Vagina (tissue), 2 donors: ENCODE measurements at regions of chr19 and their contacts with region 1.

Region 1: DNA sequence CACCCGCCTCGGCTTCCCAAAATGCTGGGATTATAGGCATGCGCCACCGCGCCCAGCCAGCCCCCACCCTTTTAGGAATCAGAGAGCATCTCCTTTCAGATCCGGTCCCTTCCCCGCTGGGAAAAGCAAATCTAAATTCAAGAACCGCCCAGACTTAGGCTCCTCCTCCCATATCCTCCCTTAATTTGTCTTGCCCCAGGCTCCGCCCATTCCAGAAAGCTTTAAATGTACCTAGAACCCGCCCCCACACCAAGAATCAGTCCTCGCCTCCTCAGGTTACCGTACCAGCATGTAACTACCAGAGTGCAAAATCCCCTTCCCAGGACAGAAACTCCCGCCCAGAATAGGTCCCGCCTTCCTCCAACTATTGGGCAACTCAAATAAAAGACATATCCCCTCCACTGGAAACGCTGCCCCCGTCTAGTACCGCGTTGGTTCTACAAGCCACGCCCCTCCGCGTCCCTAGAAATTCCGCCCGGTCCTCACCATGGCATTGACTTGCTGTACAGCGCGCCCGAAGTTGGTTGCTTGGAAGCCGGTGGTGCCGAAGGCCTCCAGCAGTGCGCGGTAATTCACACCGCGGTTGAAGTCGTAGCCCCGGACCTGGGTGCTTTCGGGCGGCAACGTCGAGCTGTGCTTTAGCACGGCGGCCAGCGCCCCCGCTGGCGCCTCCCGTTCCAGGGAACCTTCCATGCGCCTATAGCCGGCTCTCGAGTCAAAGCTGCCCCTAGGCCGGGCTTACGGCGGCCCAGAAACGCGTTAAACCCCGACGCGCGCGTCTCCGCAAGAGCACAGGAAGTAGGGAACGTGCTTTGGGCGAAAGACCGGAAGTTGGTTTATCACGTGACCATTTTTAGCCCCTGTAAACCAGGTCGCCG is at the start of gene DHPS:
- DNase-seq: peak in 1 of 2 donors; percentile 94
- H3K4me3 ChIP-seq: peak within 1 kb of the TSS; percentile 78 to 96
- H3K27ac ChIP-seq: peak within 1 kb of the TSS; percentile 90
- H3K4me1 ChIP-seq: peaks cover 20% of the 10 kb centered on the region
- H3K27me3 ChIP-seq: no peaks in the 10 kb centered on the region
- CTCF ChIP-seq: no peak
- POLR2A ChIP-seq: peak in 1 of 2 donors; percentile 10
- total RNA-seq, gene DHPS: 119 TPM

Region 2: GRCh38 chr19:12626958-12627357 is 54.4 kb before region 1 on chr19:
- intact Hi-C with region 1: loop called (anchors 2 kb)
- DNase-seq: no peak
- H3K4me3 ChIP-seq: no peak overlapping the region
- H3K27ac ChIP-seq: no peak overlapping the region
- H3K4me1 ChIP-seq: peaks cover 10% of the 10 kb centered on the region
- H3K27me3 ChIP-seq: no peaks in the 10 kb centered on the region
- CTCF ChIP-seq: no peak
- POLR2A ChIP-seq: no peak

Region 3: GRCh38 chr19:12666265-12667048 is 14.9 kb before region 1 on chr19 and contains the starts of genes MAN2B1 and WDR83:
- intact Hi-C with region 1: loop called (anchors 1 kb)
- DNase-seq: no peak
- H3K4me3 ChIP-seq: peak within 1 kb of the TSS; percentile 66 to 86
- H3K27ac ChIP-seq: peak within 1 kb of the TSS; percentile 56
- H3K4me1 ChIP-seq: peaks cover 49% of the 10 kb centered on the region
- H3K27me3 ChIP-seq: no peaks in the 10 kb centered on the region
- CTCF ChIP-seq: no peak
- POLR2A ChIP-seq: no peak
- total RNA-seq, gene MAN2B1: 49.1 TPM
- total RNA-seq, gene WDR83: 8.3 TPM